ENCODE measurements at regions of chr11 and their contacts with region 1.

Region 1: GRCh38 chr11:125404776-125405435 is 91.2 kb downstream of the FEZ1 start:
- DNase-seq: peak; percentile 80
- ATAC-seq: peak; percentile 90

Region 2: DNA sequence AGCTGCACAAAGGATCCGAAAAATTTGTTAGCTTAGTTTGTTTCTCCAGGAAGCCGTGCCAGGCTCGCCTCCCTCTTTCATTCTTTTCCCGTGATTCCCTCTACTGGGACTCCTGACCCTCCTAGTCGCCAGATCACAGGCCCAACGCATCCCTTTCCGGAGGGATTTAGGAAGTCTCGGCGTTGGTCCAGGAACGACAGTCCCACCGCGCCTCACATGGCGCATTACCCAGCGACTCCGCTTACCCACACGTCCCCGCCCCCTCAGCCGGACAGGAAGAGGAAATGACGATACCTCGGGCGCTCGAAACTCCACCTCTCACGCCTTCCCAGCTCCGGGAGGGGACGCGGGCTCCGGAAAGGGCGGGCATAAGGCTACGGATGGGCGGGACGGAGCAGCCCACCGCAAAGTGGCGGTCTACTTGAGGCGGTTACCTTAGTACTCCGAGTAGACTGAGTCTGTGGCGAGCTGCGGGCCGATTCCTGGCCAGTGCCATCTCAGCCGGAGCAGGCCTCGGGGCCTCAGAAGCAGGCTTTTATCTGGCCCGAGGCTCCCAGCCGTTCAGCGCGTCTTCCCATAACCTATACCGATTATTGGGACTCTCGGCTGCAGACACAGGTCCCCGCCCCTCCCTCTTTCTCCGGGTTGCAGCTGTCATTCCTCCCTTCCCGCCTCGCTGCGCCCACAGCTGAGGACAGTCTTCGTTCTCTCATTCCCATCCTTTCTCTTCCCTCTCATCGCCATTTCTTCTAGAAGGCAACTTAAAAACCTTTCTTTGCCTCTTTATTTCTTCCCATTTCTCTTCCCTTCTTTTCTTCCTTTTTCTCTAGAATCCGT is 450.9 kb before region 1 on chr11 and contains the start of gene CCDC15:
- intact Hi-C with region 1: loop called (anchors 10 kb)
- DNase-seq: peak; percentile 99
- ATAC-seq: peak; percentile 100
- total RNA-seq, gene CCDC15: 0.38 TPM

Region 3: GRCh38 chr11:125091247-125091876 is 313.5 kb before region 1 on chr11:
- intact Hi-C with region 1: loop called (anchors 1 kb)
- DNase-seq: no peak
- ATAC-seq: peak; percentile 88

Region 4: GRCh38 chr11:125164422-125165110 is 240.3 kb before region 1 on chr11 and contains the start of gene PKNOX2:
- intact Hi-C with region 1: loop called (anchors 5 kb)
- DNase-seq: peak; percentile 84
- ATAC-seq: peak; percentile 83
- total RNA-seq, gene PKNOX2: 9.1 TPM

Region 5: GRCh38 chr11:125345421-125346178 is 59.3 kb before region 1 on chr11:
- intact Hi-C with region 1: loop called (anchors 1 kb)
- DNase-seq: peak; percentile 86
- ATAC-seq: peak; percentile 90

Region 6: DNA sequence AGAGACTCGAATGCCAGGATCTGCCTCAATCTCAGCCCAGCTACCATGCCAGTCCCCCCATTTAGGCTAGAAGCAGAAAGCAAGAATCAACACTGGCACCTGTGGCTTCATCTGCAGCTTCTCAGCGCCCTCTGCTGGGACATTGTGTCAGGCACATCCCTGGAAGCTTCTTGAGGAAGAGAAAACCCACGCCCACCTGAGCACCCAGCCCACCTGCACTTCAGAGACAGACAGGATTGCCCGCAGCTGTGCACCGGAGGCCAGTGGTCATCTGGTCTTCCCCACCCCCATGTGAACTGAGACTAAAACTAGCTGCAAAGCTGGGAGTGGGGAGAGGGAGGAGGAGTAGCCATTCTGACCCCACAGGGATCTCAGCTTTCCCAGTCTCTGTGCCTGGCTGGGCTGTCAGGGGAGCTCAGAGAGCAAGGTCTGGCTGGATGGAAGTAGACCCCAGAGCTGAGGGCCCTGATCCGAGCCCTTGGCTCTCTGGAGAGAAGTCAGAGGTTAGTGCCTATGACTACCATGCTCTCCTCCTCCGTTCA is 24.3 kb after region 1 on chr11:
- intact Hi-C with region 1: loop called (anchors 1 kb)
- DNase-seq: peak; percentile 65
- ATAC-seq: peak; percentile 24

Measured in Right ventricle myocardium inferior (tissue), 1 donor.